AG04449 (cell line): ENCODE measurements at regions of chr18 and their contacts with region 1.

Region 1: GRCh38 chr18:52339891-52340371 is at the start of gene DCC:
- DNase-seq: peak; percentile 46
- H3K4me3 ChIP-seq: peak within 1 kb of the TSS; percentile 84
- CTCF ChIP-seq: peak; percentile 81

Region 2: DNA sequence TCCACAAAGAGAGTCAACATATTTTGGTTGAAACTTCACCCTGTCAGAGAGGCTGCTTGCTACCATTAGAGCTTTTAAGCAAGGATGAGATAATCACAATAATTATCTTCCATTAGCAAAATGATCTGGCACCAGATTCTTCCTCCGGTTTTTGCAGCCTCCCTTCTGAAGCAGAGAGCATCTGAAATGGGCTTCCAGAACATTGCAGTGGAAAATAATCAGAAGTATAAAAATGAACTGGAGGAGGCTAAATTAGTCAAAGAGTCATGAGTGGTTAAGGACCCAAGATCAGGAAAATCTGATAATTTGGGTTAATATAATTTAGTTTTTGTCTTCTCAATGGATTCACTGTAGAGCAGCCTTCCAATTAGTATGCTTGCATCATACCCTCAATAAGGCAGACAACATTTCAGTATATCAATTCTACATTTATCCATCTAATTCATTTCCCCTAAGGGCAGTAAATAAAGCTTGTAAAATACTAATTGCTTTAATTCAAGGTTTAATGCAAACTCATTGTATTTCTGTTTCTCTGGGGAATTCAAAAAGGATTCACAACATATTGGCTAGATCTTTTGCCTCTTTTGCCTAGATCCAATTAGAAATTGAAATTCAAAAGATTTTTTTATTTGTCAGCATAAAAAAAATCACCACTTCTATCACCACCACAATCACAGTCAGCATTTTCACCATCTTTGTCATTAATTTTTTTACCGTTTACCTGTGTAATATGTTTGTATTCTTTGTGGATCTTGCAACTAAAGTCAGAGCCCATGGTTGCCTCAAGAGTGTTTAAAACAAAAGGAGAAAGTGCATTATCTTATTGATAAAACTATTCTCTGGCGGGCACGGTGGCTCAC is 537.1 kb before region 1 on chr18:
- CTCF ChIA-PET with region 1: no interaction called
- POLR2A ChIA-PET with region 1: no interaction called
- DNase-seq: no peak
- H3K4me3 ChIP-seq: no peak overlapping the region
- CTCF ChIP-seq: no peak

Region 3: DNA sequence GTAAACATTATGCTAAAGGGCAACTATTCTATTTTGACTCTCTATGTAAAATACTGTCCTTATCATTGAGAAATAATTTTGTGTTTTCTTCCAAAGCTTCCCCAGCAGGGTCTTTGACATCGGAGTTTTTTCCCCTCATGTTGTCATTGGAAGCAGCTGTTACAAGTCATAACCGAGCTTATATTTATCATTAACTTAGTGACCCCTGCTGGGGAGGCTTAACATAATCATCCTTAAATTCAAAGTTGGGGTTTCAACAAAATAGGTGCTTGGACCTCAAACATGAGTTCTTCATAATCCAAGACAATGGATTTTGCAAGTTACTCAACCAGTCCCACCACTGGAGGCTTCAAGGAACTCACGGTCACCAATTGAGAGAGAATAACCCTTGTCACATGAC is 331.0 kb after region 1 on chr18:
- CTCF ChIA-PET with region 1: interaction called, 174 read pairs
- POLR2A ChIA-PET with region 1: no interaction called
- DNase-seq: no peak
- H3K4me3 ChIP-seq: no peak overlapping the region
- CTCF ChIP-seq: peak; percentile 10